Activated CD4-positive, alpha-beta memory T cell treated with anti-CD3 and anti-CD28 coated beads, Interleukin-2, amount 10 ng/mL, durations not matched to agents 7 days and 5 days (primary cell): ENCODE measurements at regions of chr1 and their contacts with region 1.

Region 1: GRCh38 chr1:239719642-239720258 is 333.4 kb downstream of the CHRM3 start:
- DNase-seq: peak; percentile 76
- H3K4me3 Mint-ChIP-seq: peak overlapping the region; percentile 86
- H3K27ac Mint-ChIP-seq: peak overlapping the region; percentile 96
- H3K4me1 Mint-ChIP-seq: peaks cover 32% of the 10 kb centered on the region
- H3K27me3 Mint-ChIP-seq: no peaks in the 10 kb centered on the region

Region 2: GRCh38 chr1:239706245-239706892 is 13.4 kb before region 1 on chr1:
- CTCF ChIA-PET with region 1: interaction called, 10 read pairs
- POLR2A ChIA-PET with region 1: interaction called, 47 read pairs
- DNase-seq: no peak
- H3K4me3 Mint-ChIP-seq: no peak overlapping the region
- H3K27ac Mint-ChIP-seq: no peak overlapping the region
- H3K4me1 Mint-ChIP-seq: peaks cover 22% of the 10 kb centered on the region
- H3K27me3 Mint-ChIP-seq: no peaks in the 10 kb centered on the region

Region 3: GRCh38 chr1:239778221-239778813 is 58.6 kb after region 1 on chr1:
- CTCF ChIA-PET with region 1: no interaction called
- POLR2A ChIA-PET with region 1: no interaction called
- DNase-seq: no peak
- H3K4me3 Mint-ChIP-seq: no peak overlapping the region
- H3K27ac Mint-ChIP-seq: no peak overlapping the region
- H3K4me1 Mint-ChIP-seq: no peaks in the 10 kb centered on the region
- H3K27me3 Mint-ChIP-seq: no peaks in the 10 kb centered on the region

Region 4: DNA sequence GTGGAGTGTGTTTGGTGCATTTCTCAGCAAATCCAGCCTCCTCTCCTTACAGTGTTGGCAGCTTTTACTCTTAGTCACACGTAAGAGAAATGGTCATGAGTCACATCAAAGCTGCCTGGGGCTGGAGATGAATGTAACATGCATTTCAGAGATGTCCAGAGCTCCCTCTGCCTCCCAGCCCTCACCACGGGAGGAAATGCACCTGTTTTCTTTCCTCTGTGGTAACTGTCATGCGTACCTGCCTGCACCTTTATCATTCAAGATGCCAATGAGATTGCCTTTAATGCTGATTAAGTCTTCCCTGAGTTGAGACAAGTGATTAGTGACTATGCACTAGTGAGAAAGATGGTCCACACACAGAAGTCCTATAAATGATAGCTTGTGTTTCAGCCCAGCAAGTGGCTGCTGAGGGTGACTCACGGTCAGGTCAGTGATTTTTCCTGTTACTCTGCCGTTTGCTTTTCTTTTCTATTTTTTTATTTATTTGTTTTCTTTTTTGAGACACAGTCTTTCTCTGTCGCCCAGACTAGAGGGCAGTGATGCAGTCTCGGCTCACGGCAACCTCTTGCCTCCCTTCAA is 94.6 kb after region 1 on chr1:
- CTCF ChIA-PET with region 1: interaction called, 14 read pairs
- POLR2A ChIA-PET with region 1: interaction called, 21 read pairs
- DNase-seq: peak; percentile 45
- H3K4me3 Mint-ChIP-seq: peak overlapping the region; percentile 49
- H3K27ac Mint-ChIP-seq: peak overlapping the region; percentile 44
- H3K4me1 Mint-ChIP-seq: peaks cover 44% of the 10 kb centered on the region
- H3K27me3 Mint-ChIP-seq: no peaks in the 10 kb centered on the region